Endothelial cell of umbilical vein (primary cell): ENCODE measurements at regions of chr2 and their contacts with region 1.

Region 1: DNA sequence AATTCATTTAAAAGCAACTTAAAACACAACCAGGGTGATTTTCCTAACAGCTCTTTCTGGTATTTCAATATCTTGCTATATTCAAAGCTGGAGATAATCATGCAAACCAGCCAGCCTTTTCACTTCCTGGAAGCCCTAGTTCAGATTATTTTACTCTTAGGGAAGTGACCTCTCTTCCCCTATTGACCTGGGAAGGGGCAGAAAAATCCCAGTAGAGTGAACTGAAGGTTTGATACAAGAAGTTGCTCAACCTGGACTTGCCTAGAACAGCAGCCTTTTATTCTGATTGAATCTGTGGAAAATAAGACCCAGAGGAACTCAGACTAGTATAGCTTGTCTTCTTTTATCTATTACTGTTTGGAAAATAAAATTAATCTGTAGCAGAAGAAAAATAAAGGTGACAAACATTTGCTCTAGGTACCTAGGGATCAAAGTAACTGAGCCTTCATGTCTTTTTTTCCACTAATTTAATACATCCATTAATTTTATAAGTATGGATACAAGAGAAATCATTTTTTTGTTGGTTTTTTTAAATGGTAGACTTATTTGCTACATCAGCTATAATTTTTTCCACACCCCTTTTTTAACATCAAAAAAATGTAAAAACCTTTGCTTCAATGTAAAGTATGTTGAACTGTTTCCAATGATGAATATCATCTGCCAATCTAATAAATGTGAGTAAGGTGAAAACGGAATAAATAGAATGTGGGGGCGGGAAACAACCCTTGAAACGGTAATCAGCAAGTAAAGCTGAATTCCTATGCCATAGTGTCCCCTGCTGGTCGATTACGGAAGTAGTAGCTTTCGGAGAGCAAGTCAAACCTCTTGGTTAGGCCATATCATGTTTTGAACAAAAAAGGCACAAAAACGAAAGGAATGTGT is 629.9 kb downstream of the NRXN1 start:
- DNase-seq: peak; percentile 71
- H3K4me3 ChIP-seq: no peak overlapping the region
- H3K27ac ChIP-seq: no peak overlapping the region
- H3K4me1 ChIP-seq: peaks cover 2% of the 10 kb centered on the region
- H3K27me3 ChIP-seq: peaks cover 0 to 2% of the 10 kb centered on the region in 2 experiments
- CTCF ChIP-seq: peak; percentile 77 to 80
- POLR2A ChIP-seq: no peak

Region 2: DNA sequence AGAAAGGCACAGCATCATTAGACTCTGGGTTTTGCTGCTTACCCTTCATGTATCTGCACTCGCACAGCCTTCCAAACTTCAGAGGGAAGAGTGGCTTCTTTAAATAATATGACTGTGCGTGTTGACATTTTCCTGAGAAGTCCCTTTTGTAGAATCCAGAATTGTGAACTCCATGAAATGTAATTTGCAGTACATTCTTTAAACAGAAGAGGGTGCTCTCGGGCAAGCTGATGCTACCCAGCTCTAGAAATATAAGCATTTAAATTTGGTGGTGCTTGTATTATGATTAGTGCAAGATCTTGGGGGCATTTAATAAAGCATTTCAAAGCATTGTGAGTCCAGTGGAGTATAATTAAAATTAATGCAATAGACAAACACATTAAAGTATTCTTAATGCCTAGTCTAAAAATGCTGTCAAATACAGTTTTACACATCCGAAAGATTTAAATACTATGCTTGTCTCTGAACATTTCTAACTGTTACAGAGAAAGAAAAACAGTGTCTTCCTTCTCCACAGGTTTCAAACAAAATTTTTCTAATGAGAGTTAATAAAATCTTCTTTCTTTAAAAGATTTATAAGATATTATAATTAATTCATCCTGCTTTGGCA is 1801.7 kb before region 1 on chr2:
- CTCF ChIA-PET with region 1: interaction called, 36 read pairs
- POLR2A ChIA-PET with region 1: no interaction called
- dilution Hi-C with region 1: no loop called
- intact Hi-C with region 1: loop called (anchors 1 kb)
- DNase-seq: peak; percentile 78
- H3K4me3 ChIP-seq: no peak overlapping the region
- H3K27ac ChIP-seq: no peak overlapping the region
- H3K4me1 ChIP-seq: no peaks in the 10 kb centered on the region
- H3K27me3 ChIP-seq: no peaks in the 10 kb centered on the region
- CTCF ChIP-seq: peak; percentile 43 to 61
- POLR2A ChIP-seq: no peak

Region 3: GRCh38 chr2:48946449-48947048 is 1455.5 kb before region 1 on chr2:
- CTCF ChIA-PET with region 1: interaction called, 54 read pairs
- POLR2A ChIA-PET with region 1: no interaction called
- dilution Hi-C with region 1: no loop called
- intact Hi-C with region 1: loop called (anchors 1 kb)
- DNase-seq: peak; percentile 56
- H3K4me3 ChIP-seq: no peak overlapping the region
- H3K27ac ChIP-seq: no peak overlapping the region
- H3K4me1 ChIP-seq: no peaks in the 10 kb centered on the region
- H3K27me3 ChIP-seq: no peaks in the 10 kb centered on the region
- CTCF ChIP-seq: peak; percentile 58 to 64
- POLR2A ChIP-seq: no peak

Region 4: GRCh38 chr2:49255409-49255971 is 1146.5 kb before region 1 on chr2:
- CTCF ChIA-PET with region 1: interaction called, 5 read pairs
- POLR2A ChIA-PET with region 1: no interaction called
- dilution Hi-C with region 1: no loop called
- intact Hi-C with region 1: loop called (anchors 1 kb)
- DNase-seq: peak; percentile 6
- H3K4me3 ChIP-seq: no peak overlapping the region
- H3K27ac ChIP-seq: no peak overlapping the region
- H3K4me1 ChIP-seq: no peaks in the 10 kb centered on the region
- H3K27me3 ChIP-seq: no peaks in the 10 kb centered on the region
- CTCF ChIP-seq: no peak
- POLR2A ChIP-seq: no peak

Region 5: DNA sequence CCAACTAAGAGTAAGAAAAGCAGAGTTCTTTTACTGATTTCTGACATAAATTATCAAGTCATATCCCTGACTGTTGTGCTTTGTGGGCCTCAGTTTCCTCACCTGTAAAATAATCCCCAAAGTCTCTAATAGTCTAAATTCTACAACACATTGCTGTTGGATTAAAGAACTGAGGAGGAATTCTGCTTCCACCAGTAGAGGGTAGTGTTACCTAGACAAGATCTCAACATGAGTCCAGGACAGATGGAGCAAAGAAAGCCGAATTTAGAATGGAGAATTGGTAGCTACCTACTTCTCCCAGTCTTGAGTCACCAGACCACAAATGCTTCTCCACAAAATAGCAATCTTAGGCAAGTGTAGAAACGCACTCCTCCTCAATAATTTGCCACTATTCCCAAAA is 785.2 kb before region 1 on chr2:
- CTCF ChIA-PET with region 1: no interaction called
- POLR2A ChIA-PET with region 1: no interaction called
- dilution Hi-C with region 1: no loop called
- intact Hi-C with region 1: loop called (anchors 1 kb)
- DNase-seq: no peak
- H3K4me3 ChIP-seq: no peak overlapping the region
- H3K27ac ChIP-seq: no peak overlapping the region
- H3K4me1 ChIP-seq: no peaks in the 10 kb centered on the region
- H3K27me3 ChIP-seq: no peaks in the 10 kb centered on the region
- CTCF ChIP-seq: no peak
- POLR2A ChIP-seq: no peak

Region 6: GRCh38 chr2:49770919-49771318 is 631.1 kb before region 1 on chr2:
- CTCF ChIA-PET with region 1: no interaction called
- POLR2A ChIA-PET with region 1: no interaction called
- dilution Hi-C with region 1: no loop called
- intact Hi-C with region 1: loop called (anchors 1 kb)
- DNase-seq: no peak
- H3K4me3 ChIP-seq: no peak overlapping the region
- H3K27ac ChIP-seq: no peak overlapping the region
- H3K4me1 ChIP-seq: no peaks in the 10 kb centered on the region
- H3K27me3 ChIP-seq: no peaks in the 10 kb centered on the region
- CTCF ChIP-seq: peak in 1 of 2 donors; percentile 15
- POLR2A ChIP-seq: no peak

Region 7: DNA sequence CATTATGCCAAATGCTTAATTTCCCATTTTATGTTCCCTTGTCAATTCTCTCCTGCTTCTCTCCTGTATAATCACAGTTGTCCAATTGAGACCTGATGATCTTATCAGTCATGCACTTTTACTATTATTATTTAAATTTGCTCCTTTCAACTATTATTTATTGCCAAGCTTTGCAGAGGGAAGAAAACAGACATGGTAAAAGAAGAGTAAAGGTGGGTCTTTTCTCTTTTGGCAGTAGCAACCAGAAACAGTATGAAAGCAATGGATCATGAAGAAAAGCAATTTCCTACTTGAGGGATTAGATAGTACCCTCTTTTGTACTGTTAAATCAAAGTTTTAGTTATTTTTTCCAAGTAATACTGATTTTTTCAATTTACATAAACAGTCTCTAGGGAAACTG is 37.5 kb before region 1 on chr2:
- CTCF ChIA-PET with region 1: no interaction called
- POLR2A ChIA-PET with region 1: no interaction called
- dilution Hi-C with region 1: no loop called
- intact Hi-C with region 1: no loop called
- DNase-seq: no peak
- H3K4me3 ChIP-seq: no peak overlapping the region
- H3K27ac ChIP-seq: no peak overlapping the region
- H3K4me1 ChIP-seq: no peaks in the 10 kb centered on the region
- H3K27me3 ChIP-seq: no peaks in the 10 kb centered on the region
- CTCF ChIP-seq: no peak
- POLR2A ChIP-seq: no peak